ENCODE measurements at regions of chr2 and their contacts with region 1.

Region 1: GRCh38 chr2:143259368-143259958 is 130.2 kb downstream of the ARHGAP15 start:
- DNase-seq: peak; percentile 64
- H3K4me3 Mint-ChIP-seq: peak overlapping the region; percentile 78
- H3K27ac Mint-ChIP-seq: peak overlapping the region; percentile 97
- H3K4me1 Mint-ChIP-seq: peaks cover 85% of the 10 kb centered on the region
- H3K27me3 Mint-ChIP-seq: no peaks in the 10 kb centered on the region

Region 2: GRCh38 chr2:143034292-143035074 is 225.0 kb before region 1 on chr2:
- intact Hi-C with region 1: loop called (anchors 1 kb)
- DNase-seq: peak; percentile 48
- H3K4me3 Mint-ChIP-seq: no peak overlapping the region
- H3K27ac Mint-ChIP-seq: no peak overlapping the region
- H3K4me1 Mint-ChIP-seq: peaks cover 9% of the 10 kb centered on the region
- H3K27me3 Mint-ChIP-seq: no peaks in the 10 kb centered on the region

Region 3: DNA sequence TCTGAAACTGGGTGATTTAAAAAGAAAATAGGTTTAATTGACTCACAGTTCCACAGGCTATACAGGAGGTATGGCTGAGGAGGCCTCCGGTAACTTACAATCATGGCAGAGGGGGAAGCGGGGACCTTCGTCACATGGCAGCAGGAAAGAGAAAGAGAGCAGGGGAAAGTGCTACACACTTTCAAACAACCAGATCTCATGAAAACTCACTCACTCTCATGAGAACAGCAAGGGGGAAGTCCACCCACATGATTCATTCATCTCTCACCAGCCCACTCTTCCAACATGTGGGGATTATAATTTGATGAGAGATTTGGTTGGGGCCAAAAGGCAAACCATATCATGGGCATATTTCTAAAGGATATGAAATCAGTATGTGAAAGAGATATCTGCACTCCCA is 142.2 kb before region 1 on chr2:
- intact Hi-C with region 1: no loop called
- DNase-seq: no peak
- H3K4me3 Mint-ChIP-seq: no peak overlapping the region
- H3K27ac Mint-ChIP-seq: no peak overlapping the region
- H3K4me1 Mint-ChIP-seq: peaks cover 40% of the 10 kb centered on the region
- H3K27me3 Mint-ChIP-seq: no peaks in the 10 kb centered on the region

Region 4: GRCh38 chr2:143128681-143129580 is 130.5 kb before region 1 on chr2 and contains the start of gene ARHGAP15:
- intact Hi-C with region 1: loop called (anchors 1 kb)
- DNase-seq: peak; percentile 55
- H3K4me3 Mint-ChIP-seq: peak within 1 kb of the TSS; percentile 75
- H3K27ac Mint-ChIP-seq: peak within 1 kb of the TSS; percentile 93
- H3K4me1 Mint-ChIP-seq: peaks cover 40% of the 10 kb centered on the region
- H3K27me3 Mint-ChIP-seq: no peaks in the 10 kb centered on the region
- total RNA-seq, gene ARHGAP15: 64.3 and 65.3 TPM in 2 replicates

Region 5: GRCh38 chr2:143177096-143177786 is 82.2 kb before region 1 on chr2:
- intact Hi-C with region 1: loop called (anchors 1 kb)
- DNase-seq: no peak
- H3K4me3 Mint-ChIP-seq: peak overlapping the region; percentile 78
- H3K27ac Mint-ChIP-seq: peak overlapping the region; percentile 85
- H3K4me1 Mint-ChIP-seq: peaks cover 53% of the 10 kb centered on the region
- H3K27me3 Mint-ChIP-seq: no peaks in the 10 kb centered on the region

Region 6: GRCh38 chr2:143217512-143218115 is 41.8 kb before region 1 on chr2:
- intact Hi-C with region 1: loop called (anchors 1 kb)
- DNase-seq: no peak
- H3K4me3 Mint-ChIP-seq: no peak overlapping the region
- H3K27ac Mint-ChIP-seq: peak overlapping the region; percentile 61
- H3K4me1 Mint-ChIP-seq: peaks cover 51% of the 10 kb centered on the region
- H3K27me3 Mint-ChIP-seq: no peaks in the 10 kb centered on the region

Region 7: DNA sequence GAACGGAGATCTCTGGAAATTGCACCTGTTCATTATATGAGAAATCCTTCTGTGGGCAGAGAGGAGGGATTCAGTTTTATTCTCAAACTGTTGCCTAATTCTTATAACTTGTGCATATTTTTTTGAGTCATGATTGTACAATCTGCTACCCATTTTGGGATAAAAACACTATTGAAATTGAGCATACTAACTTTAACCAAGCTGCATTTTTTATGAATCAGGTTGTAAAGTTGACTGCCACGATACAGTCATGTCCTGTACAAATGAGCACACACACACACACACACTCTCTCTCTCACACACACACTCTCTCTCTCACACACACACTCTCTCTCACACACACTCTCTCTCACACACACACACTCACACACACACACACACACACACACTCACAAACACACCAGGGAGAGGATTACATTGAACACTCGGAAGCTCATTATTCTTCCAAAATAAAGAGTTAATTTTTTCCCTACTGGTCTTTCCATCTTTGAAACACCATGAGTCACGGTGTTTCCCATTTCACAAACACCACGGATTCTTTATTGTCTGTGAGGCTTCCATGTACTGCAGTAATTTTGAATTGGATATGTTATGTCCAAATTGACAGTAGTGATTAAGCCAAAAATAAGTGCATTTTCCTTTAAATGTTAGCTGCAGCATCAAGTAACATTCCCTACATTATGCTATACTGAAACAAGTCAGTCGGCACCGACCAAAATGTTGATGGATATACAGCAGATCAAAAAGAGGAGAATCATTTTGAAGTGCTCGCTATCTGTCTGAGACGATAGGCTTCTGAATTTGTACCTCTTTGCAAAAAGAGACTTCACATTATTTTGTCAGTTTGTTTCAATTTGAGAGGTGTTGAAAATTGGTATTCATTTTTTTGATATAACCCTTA is 86.7 kb after region 1 on chr2:
- intact Hi-C with region 1: no loop called
- DNase-seq: no peak
- H3K4me3 Mint-ChIP-seq: no peak overlapping the region
- H3K27ac Mint-ChIP-seq: no peak overlapping the region
- H3K4me1 Mint-ChIP-seq: no peaks in the 10 kb centered on the region
- H3K27me3 Mint-ChIP-seq: no peaks in the 10 kb centered on the region

Region 8: GRCh38 chr2:143451642-143452281 is 192.3 kb after region 1 on chr2:
- intact Hi-C with region 1: loop called (anchors 5 kb)
- DNase-seq: no peak
- H3K4me3 Mint-ChIP-seq: no peak overlapping the region
- H3K27ac Mint-ChIP-seq: no peak overlapping the region
- H3K4me1 Mint-ChIP-seq: peaks cover 42% of the 10 kb centered on the region
- H3K27me3 Mint-ChIP-seq: no peaks in the 10 kb centered on the region

Region 9: DNA sequence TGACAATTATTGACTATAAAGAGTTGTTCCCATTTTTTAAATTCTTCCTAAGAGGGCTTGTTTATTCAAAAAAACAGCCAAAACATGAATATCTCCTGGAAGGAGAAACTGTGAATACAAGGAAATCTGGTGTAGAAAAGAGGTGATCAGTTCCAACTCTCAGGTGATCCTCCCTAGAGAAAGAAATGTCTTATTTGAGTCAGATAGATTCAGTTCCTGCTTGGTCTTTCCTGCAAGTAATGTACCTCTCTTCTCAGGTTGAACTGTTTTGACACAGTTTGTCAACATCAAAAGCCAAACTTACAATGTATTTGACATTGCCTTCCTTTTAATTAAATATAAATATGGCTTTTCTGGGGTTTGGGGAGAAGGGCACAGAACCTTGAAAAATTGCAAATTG is 437.2 kb after region 1 on chr2:
- intact Hi-C with region 1: loop called (anchors 5 kb)
- DNase-seq: no peak
- H3K4me3 Mint-ChIP-seq: no peak overlapping the region
- H3K27ac Mint-ChIP-seq: no peak overlapping the region
- H3K4me1 Mint-ChIP-seq: peaks cover 27% of the 10 kb centered on the region
- H3K27me3 Mint-ChIP-seq: no peaks in the 10 kb centered on the region

Measured in activated T-helper 1 cell treated with anti-CD3 and anti-CD28 coated beads, Interleukin-12 subunit alpha, Interleukin-12 subunit beta, Interleukin-2, Interleukin-4 antibody, amounts not matched to agents 30 ng/mL and 10 ng/mL and 1 ng/mL, durations not matched to agents 14 hours and 24 hours and 36 hours (primary cell).